BJ (cell line): ENCODE measurements at regions of chr17 and their contacts with region 1.

Region 1: GRCh38 chr17:47698749-47699535 is 5.0 kb downstream of the TBKBP1 start:
- DNase-seq: no peak
- H3K4me3 ChIP-seq: no peak overlapping the region
- H3K27me3 ChIP-seq: no peaks in the 10 kb centered on the region
- CTCF ChIP-seq: peak; percentile 97

Region 2: DNA sequence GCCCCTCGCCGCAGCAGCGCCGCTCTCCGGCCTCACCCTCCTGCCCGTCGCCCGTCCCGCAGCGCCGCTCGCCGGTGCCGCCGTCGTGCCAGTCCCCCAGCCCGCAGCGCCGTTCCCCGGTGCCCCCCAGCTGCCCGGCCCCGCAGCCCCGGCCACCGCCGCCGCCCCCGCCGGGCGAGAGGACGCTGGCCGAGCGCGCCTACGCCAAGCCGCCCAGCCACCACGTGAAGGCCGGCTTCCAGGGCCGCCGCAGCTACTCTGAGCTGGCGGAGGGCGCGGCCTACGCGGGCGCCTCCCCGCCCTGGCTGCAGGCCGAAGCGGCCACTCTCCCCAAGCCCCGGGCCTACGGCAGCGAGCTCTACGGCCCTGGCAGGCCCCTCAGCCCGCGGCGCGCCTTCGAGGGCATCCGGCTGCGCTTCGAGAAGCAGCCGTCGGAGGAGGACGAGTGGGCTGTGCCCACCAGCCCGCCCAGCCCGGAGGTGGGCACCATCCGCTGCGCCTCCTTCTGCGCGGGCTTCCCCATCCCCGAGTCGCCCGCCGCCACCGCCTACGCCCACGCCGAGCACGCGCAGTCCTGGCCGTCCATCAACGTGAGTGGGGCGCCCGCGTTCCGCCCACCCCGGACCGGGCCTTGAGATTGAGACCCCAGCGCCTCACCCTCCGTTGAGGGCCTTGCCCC is 10.1 kb after region 1 on chr17:
- CTCF ChIA-PET with region 1: interaction called, 35 read pairs
- POLR2A ChIA-PET with region 1: no interaction called
- DNase-seq: no peak
- H3K4me3 ChIP-seq: no peak overlapping the region
- H3K27me3 ChIP-seq: peaks cover 9% of the 10 kb centered on the region
- CTCF ChIP-seq: no peak

Region 3: GRCh38 chr17:47717261-47717697 is 18.3 kb after region 1 on chr17:
- CTCF ChIA-PET with region 1: interaction called, 16 read pairs
- POLR2A ChIA-PET with region 1: no interaction called
- DNase-seq: no peak
- H3K4me3 ChIP-seq: no peak overlapping the region
- H3K27me3 ChIP-seq: peaks cover 45% of the 10 kb centered on the region
- CTCF ChIP-seq: peak; percentile 43

Region 4: GRCh38 chr17:47987240-47987835 is 288.4 kb after region 1 on chr17:
- CTCF ChIA-PET with region 1: no interaction called
- POLR2A ChIA-PET with region 1: no interaction called
- DNase-seq: no peak
- H3K4me3 ChIP-seq: no peak overlapping the region
- H3K27me3 ChIP-seq: no peaks in the 10 kb centered on the region
- CTCF ChIP-seq: 0 out of 2 replicates have a peak, but pooled peaks have one; percentile 15